Colonic mucosa (tissue), 4 donors: ENCODE measurements at regions of chr1 and their contacts with region 1.

Region 1: DNA sequence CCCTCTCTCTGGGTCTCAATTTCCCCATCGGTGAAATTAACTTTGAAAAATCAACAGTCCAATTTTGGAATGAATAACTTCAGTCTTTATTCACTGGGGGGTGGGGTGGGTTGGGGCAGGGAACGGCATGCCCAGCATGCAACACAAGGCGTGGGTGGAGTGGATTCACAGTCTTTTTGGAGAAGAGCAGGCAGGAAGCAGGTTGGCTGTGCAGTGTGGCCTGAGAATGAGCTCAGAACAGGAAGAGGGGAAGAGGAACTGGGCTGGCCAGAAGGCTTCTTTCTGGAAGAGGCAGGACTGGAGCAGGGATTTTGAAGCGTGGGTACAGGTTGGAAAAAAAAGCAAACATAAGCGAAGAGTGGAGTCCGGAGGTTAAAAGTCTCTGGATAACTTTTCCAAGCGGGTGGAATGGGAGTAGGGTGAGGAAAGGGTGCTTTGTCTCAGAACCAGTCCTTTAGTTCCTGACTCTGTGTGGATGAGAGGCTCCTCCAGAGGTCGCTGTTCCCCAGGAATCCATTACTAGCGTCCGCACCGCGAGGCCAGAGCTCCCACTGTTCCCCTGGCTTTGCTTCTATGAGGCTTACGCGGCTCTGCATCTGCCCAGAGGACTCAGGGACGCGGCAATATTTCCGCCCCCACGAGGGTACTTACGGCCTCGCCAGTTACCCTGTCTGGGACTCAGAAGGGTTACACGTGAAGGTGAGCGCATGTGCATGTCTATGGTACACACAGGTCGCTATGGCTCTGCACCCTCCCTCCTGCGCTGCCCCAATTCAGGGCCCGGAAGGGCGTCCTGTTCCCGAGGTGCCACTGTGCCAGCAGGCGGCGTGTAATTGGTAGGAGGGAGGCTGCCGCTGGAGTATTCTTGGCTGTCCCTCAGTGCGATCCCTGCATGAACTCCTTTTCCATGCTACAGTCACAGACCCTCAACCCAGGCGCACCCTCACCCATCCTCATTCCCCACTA is 5.5 kb upstream of the FOXD2 start:
- DNase-seq: peak; percentile 92
- H3K4me3 ChIP-seq: peak overlapping the region; percentile 71
- H3K27ac ChIP-seq: peak overlapping the region; percentile 61
- H3K4me1 ChIP-seq: no peaks in the 10 kb centered on the region
- H3K27me3 ChIP-seq: peaks cover 5% of the 10 kb centered on the region
- CTCF ChIP-seq: peak; percentile 79

Region 2: GRCh38 chr1:47309427-47309826 is 122.9 kb before region 1 on chr1:
- intact Hi-C with region 1: no loop called
- DNase-seq: no peak
- H3K4me3 ChIP-seq: no peak overlapping the region
- H3K27ac ChIP-seq: no peak overlapping the region
- H3K4me1 ChIP-seq: no peaks in the 10 kb centered on the region
- H3K27me3 ChIP-seq: no peaks in the 10 kb centered on the region
- CTCF ChIP-seq: no peak

Region 3: DNA sequence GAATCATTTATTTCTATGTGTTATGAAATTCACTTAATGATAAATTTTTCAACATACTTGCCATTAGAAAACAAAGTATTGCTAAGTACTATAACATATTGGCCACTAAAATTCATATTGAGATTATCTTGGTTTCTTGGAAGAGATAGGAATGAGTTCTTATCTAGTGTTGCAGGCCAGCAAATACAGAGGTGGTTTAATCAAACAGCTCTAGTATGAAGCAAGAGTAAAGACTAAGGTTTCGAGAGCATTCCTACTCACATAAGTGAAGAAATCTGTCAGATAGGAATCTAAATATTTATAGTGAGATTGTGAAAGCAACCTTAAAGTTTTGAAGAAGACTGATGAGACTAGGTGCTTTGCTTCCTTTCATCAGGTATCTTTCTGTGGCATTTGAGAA is 54.2 kb before region 1 on chr1:
- intact Hi-C with region 1: no loop called
- DNase-seq: no peak
- H3K4me3 ChIP-seq: no peak overlapping the region
- H3K27ac ChIP-seq: no peak overlapping the region
- H3K4me1 ChIP-seq: no peaks in the 10 kb centered on the region
- H3K27me3 ChIP-seq: no peaks in the 10 kb centered on the region
- CTCF ChIP-seq: no peak

Region 4: GRCh38 chr1:47393141-47393540 is 39.2 kb before region 1 on chr1:
- intact Hi-C with region 1: loop called (anchors 5 kb)
- DNase-seq: no peak
- H3K4me3 ChIP-seq: no peak overlapping the region
- H3K27ac ChIP-seq: no peak overlapping the region
- H3K4me1 ChIP-seq: no peaks in the 10 kb centered on the region
- H3K27me3 ChIP-seq: no peaks in the 10 kb centered on the region
- CTCF ChIP-seq: no peak

Region 5: GRCh38 chr1:47527658-47528255 is 95.4 kb after region 1 on chr1:
- intact Hi-C with region 1: loop called (anchors 5 kb)
- DNase-seq: peak; percentile 77
- H3K4me3 ChIP-seq: no peak overlapping the region
- H3K27ac ChIP-seq: no peak overlapping the region
- H3K4me1 ChIP-seq: no peaks in the 10 kb centered on the region
- H3K27me3 ChIP-seq: no peaks in the 10 kb centered on the region
- CTCF ChIP-seq: peak; percentile 41

Region 6: GRCh38 chr1:47710329-47711071 is 278.1 kb after region 1 on chr1:
- intact Hi-C with region 1: loop called (anchors 2 kb)
- DNase-seq: peak; percentile 83
- H3K4me3 ChIP-seq: peak overlapping the region; percentile 41
- H3K27ac ChIP-seq: peak overlapping the region; percentile 60
- H3K4me1 ChIP-seq: no peaks in the 10 kb centered on the region
- H3K27me3 ChIP-seq: peaks cover 9% of the 10 kb centered on the region
- CTCF ChIP-seq: peak; percentile 98